Ovary (tissue), 10 donors: ENCODE measurements at regions of chr9 and their contacts with region 1.

Region 1: GRCh38 chr9:87310827-87311523 is 186.7 kb upstream of the DAPK1 start:
- DNase-seq: no peak
- H3K4me3 ChIP-seq: no peak overlapping the region
- H3K27ac ChIP-seq: no peak overlapping the region
- H3K4me1 ChIP-seq: no peaks in the 10 kb centered on the region
- H3K27me3 ChIP-seq: no peaks in the 10 kb centered on the region
- CTCF ChIP-seq: no peak
- EP300 ChIP-seq: no peak
- POLR2A ChIP-seq: no peak

Region 2: GRCh38 chr9:86413966-86414880 is 896.8 kb before region 1 on chr9:
- intact Hi-C with region 1: loop called in 1 of 4 experiments (anchors 10 kb)
- DNase-seq: no peak
- H3K4me3 ChIP-seq: no peak overlapping the region
- H3K27ac ChIP-seq: no peak overlapping the region
- H3K4me1 ChIP-seq: no peaks in the 10 kb centered on the region
- H3K27me3 ChIP-seq: no peaks in the 10 kb centered on the region
- CTCF ChIP-seq: peak; percentile 40 to 68 (median 66)
- EP300 ChIP-seq: no peak
- POLR2A ChIP-seq: no peak

Region 3: DNA sequence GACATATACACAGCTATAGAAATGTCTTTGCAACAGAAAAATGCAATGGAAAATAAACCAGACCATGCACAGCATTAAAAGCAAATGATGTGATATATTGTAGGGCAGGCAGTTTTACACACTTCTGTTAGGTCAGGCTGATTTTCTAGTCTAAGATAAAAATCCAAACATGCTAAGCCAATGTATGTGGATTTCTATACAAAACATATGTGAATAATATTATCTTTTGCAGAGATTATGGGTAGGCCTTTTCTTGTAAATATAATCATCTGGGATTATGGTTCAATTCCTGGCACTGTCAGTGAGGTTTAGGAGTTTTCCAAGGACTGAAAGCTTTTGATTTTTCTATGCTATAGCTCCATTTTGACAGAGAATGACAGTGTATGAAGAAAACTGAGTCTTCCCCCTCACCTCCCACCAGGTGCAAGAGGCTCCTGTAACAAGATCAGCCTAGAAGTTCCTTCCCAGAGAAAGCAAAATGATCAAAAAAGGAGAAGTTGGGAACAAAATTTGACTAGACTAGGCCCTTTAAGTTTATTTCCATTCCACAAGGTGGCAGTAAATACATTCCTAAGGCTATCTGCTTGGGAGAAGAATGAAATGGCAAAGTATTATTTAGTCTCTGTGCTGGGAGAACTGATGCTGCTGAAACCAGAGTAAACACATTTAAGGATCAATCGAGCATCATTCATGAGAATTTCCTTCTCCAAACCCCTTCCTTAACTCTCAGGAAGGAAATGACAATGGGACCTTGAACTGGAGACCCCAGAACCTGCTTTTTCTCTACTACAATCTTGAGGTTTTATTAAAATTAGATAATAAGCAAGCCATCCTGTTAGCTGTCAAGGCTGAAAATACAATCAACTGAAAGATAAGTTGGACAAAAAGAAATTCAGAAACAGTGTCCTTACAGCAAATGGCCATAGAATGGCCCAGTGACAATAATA is 823.8 kb before region 1 on chr9:
- intact Hi-C with region 1: loop called in 1 of 4 experiments (anchors 10 kb)
- DNase-seq: no peak
- H3K4me3 ChIP-seq: no peak overlapping the region
- H3K27ac ChIP-seq: no peak overlapping the region
- H3K4me1 ChIP-seq: no peaks in the 10 kb centered on the region
- H3K27me3 ChIP-seq: no peaks in the 10 kb centered on the region
- CTCF ChIP-seq: peak; percentile 65 to 74 (median 71)
- EP300 ChIP-seq: no peak
- POLR2A ChIP-seq: no peak

Region 4: DNA sequence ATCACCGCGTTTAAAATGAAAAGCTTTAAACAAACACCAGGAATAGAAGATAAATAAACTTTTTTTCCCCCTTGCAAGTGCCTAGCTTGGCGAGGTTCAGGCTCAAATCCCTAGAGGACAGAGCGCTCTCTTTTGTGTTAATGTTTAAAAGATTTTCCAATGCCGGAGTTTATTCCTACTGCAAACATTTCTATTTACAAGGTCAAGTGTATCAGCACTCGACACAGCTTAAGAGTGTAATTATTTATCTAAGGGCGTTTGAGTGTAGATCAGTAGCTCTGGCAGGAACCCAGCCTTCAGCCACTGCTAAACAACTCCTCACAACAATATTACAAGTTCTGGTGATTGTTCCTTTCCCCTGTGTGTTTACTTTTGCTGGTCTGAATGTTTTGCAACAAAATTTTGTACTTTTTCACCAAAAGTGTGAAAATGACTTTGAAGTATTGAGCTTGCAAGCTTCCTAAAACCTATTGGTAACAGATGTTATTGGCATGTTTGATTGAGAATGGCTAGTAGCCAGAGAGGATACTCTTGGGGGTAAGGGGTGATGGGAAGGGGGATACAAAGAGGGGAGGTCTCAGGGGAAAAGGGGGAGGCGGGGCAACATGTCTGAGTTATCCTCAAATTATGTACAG is 367.4 kb before region 1 on chr9:
- intact Hi-C with region 1: no loop called
- DNase-seq: peak in 2 of 5 donors; percentile 37 to 45
- H3K4me3 ChIP-seq: peak overlapping the region; percentile 65
- H3K27ac ChIP-seq: peak overlapping the region in 1 of 2 donors; percentile 18
- H3K4me1 ChIP-seq: no peaks in the 10 kb centered on the region
- H3K27me3 ChIP-seq: no peaks in the 10 kb centered on the region
- CTCF ChIP-seq: no peak
- EP300 ChIP-seq: no peak
- POLR2A ChIP-seq: no peak

Region 5: GRCh38 chr9:86955561-86955960 is 355.4 kb before region 1 on chr9:
- intact Hi-C with region 1: loop called in 1 of 4 experiments (anchors 10 kb)
- DNase-seq: no peak
- H3K4me3 ChIP-seq: no peak overlapping the region
- H3K27ac ChIP-seq: no peak overlapping the region
- H3K4me1 ChIP-seq: peaks cover 3% of the 10 kb centered on the region
- H3K27me3 ChIP-seq: no peaks in the 10 kb centered on the region
- CTCF ChIP-seq: no peak
- EP300 ChIP-seq: no peak
- POLR2A ChIP-seq: no peak

Region 6: GRCh38 chr9:87255431-87256155 is 55.4 kb before region 1 on chr9:
- intact Hi-C with region 1: no loop called
- DNase-seq: no peak
- H3K4me3 ChIP-seq: no peak overlapping the region
- H3K27ac ChIP-seq: no peak overlapping the region
- H3K4me1 ChIP-seq: peaks cover 2% of the 10 kb centered on the region
- H3K27me3 ChIP-seq: no peaks in the 10 kb centered on the region
- CTCF ChIP-seq: no peak
- EP300 ChIP-seq: no peak
- POLR2A ChIP-seq: no peak